CD8-positive, alpha-beta T cell (primary cell): ENCODE measurements at regions of chr7 and their contacts with region 1.

Region 1: GRCh38 chr7:55280031-55280454 is 85.1 kb upstream of the LANCL2 start:
- DNase-seq: peak; percentile 26 to 82 (median 62)
- ATAC-seq: peak; percentile 74
- H3K4me3 ChIP-seq: no peak overlapping the region
- H3K4me3 Mint-ChIP-seq: no peak overlapping the region
- H3K27ac ChIP-seq: no peak overlapping the region
- H3K27ac Mint-ChIP-seq: no peak overlapping the region
- H3K4me1 ChIP-seq: no peaks in the 10 kb centered on the region
- H3K4me1 Mint-ChIP-seq: peaks cover 2% of the 10 kb centered on the region
- H3K27me3 ChIP-seq: no peaks in the 10 kb centered on the region
- H3K27me3 Mint-ChIP-seq: no peaks in the 10 kb centered on the region
- CTCF ChIP-seq: peak; percentile 75

Region 2: GRCh38 chr7:55409482-55410225 is 129.6 kb after region 1 on chr7:
- CTCF ChIA-PET with region 1: interaction called, 105 read pairs
- POLR2A ChIA-PET with region 1: no interaction called
- intact Hi-C with region 1: no loop called
- DNase-seq: no peak
- ATAC-seq: no peak
- H3K4me3 ChIP-seq: no peak overlapping the region
- H3K4me3 Mint-ChIP-seq: no peak overlapping the region
- H3K27ac ChIP-seq: no peak overlapping the region
- H3K27ac Mint-ChIP-seq: no peak overlapping the region
- H3K4me1 ChIP-seq: no peaks in the 10 kb centered on the region
- H3K4me1 Mint-ChIP-seq: no peaks in the 10 kb centered on the region
- H3K27me3 ChIP-seq: no peaks in the 10 kb centered on the region
- H3K27me3 Mint-ChIP-seq: no peaks in the 10 kb centered on the region
- CTCF ChIP-seq: no peak

Region 3: DNA sequence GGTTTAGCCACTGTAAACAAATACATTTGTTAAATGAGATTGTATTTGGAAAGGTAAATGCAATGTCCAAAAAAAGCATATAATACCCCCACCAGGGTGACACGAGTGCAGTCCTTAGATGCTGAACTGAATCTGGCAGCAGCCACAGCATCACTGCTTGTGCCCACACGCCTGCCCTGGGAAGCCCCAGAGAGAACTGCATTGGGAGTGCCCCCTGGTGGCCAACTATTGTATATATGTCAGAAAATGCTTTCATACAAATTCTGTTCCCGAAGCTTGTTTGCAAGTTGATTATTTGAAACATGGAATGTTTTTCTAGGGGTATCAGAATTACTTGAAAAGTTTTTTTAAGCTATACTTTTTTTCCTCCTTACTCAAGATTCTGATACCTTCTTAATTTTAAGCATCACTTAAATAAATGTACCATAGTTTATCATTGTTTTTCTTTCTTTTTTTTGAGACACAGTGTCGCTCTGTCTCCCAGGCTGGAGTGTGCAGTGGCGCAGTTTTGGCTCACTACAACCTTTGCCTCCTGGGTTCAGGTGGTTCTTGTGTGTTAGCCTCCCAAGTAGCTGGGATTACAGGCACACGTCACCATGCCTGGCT is 135.2 kb after region 1 on chr7:
- CTCF ChIA-PET with region 1: interaction called, 105 read pairs
- POLR2A ChIA-PET with region 1: no interaction called
- intact Hi-C with region 1: loop called (anchors 1 kb)
- DNase-seq: peak; percentile 61 to 86 (median 84)
- ATAC-seq: peak; percentile 100
- H3K4me3 ChIP-seq: no peak overlapping the region
- H3K4me3 Mint-ChIP-seq: no peak overlapping the region
- H3K27ac ChIP-seq: no peak overlapping the region
- H3K27ac Mint-ChIP-seq: no peak overlapping the region
- H3K4me1 ChIP-seq: no peaks in the 10 kb centered on the region
- H3K4me1 Mint-ChIP-seq: no peaks in the 10 kb centered on the region
- H3K27me3 ChIP-seq: no peaks in the 10 kb centered on the region
- H3K27me3 Mint-ChIP-seq: no peaks in the 10 kb centered on the region
- CTCF ChIP-seq: peak; percentile 94

Region 4: GRCh38 chr7:55593515-55594318 is 313.7 kb after region 1 on chr7:
- CTCF ChIA-PET with region 1: interaction called, 4 read pairs
- POLR2A ChIA-PET with region 1: no interaction called
- intact Hi-C with region 1: loop called (anchors 2 kb)
- DNase-seq: peak; percentile 40 to 82 (median 68)
- ATAC-seq: peak; percentile 51
- H3K4me3 ChIP-seq: no peak overlapping the region
- H3K4me3 Mint-ChIP-seq: no peak overlapping the region
- H3K27ac ChIP-seq: no peak overlapping the region
- H3K27ac Mint-ChIP-seq: no peak overlapping the region
- H3K4me1 ChIP-seq: peaks cover 5% of the 10 kb centered on the region
- H3K4me1 Mint-ChIP-seq: peaks cover 7% of the 10 kb centered on the region
- H3K27me3 ChIP-seq: peaks cover 0 to 3% of the 10 kb centered on the region in 2 experiments
- H3K27me3 Mint-ChIP-seq: peaks cover 2% of the 10 kb centered on the region
- CTCF ChIP-seq: peak; percentile 73